ENCODE measurements at regions of chr4 and their contacts with region 1.

Region 1: DNA sequence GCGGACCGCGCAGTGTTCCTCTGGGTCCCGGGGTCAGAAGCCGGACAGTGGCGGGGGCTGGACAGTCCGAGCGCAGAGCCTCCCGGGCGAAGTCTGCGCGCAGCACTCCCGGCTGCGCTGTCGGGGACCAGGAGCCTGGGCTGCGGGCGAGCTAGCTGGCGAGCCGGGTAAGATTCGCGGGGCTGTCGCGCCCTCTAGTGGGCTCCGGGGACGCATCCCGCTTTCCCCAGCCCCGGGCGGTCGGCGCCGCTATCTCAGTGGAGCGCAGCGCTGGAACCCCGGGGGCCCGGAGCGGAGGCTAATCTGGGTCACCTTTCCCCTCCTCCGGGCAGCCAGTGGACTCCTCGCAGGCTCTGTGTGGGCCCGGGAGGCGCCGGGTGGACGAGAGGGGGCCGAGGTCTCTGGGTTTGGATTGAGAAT is 4.2 kb downstream of the PDGFRA start:
- DNase-seq: peak; percentile 64
- H3K4me3 Mint-ChIP-seq: peak overlapping the region; percentile 41
- H3K27ac Mint-ChIP-seq: no peak overlapping the region
- H3K4me1 Mint-ChIP-seq: peaks cover 19% of the 10 kb centered on the region
- H3K27me3 Mint-ChIP-seq: peaks cover 55% of the 10 kb centered on the region

Region 2: GRCh38 chr4:52376132-52376704 is 1857.1 kb before region 1 on chr4:
- intact Hi-C with region 1: loop called (anchors 5 kb)
- DNase-seq: no peak
- H3K4me3 Mint-ChIP-seq: no peak overlapping the region
- H3K27ac Mint-ChIP-seq: no peak overlapping the region
- H3K4me1 Mint-ChIP-seq: no peaks in the 10 kb centered on the region
- H3K27me3 Mint-ChIP-seq: no peaks in the 10 kb centered on the region

Region 3: DNA sequence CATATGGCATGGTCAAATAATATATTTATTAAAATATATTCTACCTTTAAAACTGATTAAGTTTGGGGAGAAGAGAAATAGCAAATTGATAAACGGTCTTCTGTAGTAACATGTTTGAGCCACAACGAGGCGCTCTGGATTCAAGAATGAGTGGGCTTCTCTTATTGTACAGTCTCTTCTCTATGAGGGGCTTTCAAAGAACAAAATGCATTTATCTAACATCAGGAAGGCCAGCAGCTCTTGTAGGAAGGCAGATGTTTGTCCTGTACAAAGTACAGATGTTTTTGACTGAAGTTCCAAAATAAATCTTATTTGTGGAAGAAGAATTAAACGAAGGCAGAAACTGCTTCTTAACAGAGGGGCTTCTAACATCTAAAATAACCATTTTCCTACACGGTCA is 1217.6 kb before region 1 on chr4:
- intact Hi-C with region 1: loop called (anchors 10 kb)
- DNase-seq: no peak
- H3K4me3 Mint-ChIP-seq: no peak overlapping the region
- H3K27ac Mint-ChIP-seq: no peak overlapping the region
- H3K4me1 Mint-ChIP-seq: peaks cover 28% of the 10 kb centered on the region
- H3K27me3 Mint-ChIP-seq: no peaks in the 10 kb centered on the region

Region 4: DNA sequence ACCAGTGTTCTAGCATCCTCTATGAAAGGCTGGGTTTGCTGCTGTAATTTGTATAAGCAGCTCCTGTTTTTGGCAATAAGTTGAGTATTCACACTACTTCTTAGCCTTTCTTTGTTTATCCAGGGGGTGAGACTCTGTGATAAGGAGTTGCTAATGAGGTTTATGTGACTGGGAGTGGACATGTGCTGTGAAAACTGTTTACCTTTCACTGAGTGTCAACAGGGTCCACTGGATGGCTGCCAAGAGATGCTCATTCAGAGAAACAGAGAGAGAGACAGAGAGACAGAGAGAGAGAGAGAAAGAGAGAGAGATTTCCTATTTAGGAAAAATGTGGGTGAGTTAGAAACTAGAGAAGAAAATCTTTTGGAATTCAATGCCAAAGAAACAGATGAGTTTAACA is 402.8 kb before region 1 on chr4:
- intact Hi-C with region 1: no loop called
- DNase-seq: no peak
- H3K4me3 Mint-ChIP-seq: no peak overlapping the region
- H3K27ac Mint-ChIP-seq: no peak overlapping the region
- H3K4me1 Mint-ChIP-seq: no peaks in the 10 kb centered on the region
- H3K27me3 Mint-ChIP-seq: no peaks in the 10 kb centered on the region

Region 5: GRCh38 chr4:53908661-53909078 is 324.6 kb before region 1 on chr4:
- intact Hi-C with region 1: loop called (anchors 1 kb)
- DNase-seq: no peak
- H3K4me3 Mint-ChIP-seq: no peak overlapping the region
- H3K27ac Mint-ChIP-seq: no peak overlapping the region
- H3K4me1 Mint-ChIP-seq: peaks cover 11% of the 10 kb centered on the region
- H3K27me3 Mint-ChIP-seq: peaks cover 46% of the 10 kb centered on the region

Region 6: DNA sequence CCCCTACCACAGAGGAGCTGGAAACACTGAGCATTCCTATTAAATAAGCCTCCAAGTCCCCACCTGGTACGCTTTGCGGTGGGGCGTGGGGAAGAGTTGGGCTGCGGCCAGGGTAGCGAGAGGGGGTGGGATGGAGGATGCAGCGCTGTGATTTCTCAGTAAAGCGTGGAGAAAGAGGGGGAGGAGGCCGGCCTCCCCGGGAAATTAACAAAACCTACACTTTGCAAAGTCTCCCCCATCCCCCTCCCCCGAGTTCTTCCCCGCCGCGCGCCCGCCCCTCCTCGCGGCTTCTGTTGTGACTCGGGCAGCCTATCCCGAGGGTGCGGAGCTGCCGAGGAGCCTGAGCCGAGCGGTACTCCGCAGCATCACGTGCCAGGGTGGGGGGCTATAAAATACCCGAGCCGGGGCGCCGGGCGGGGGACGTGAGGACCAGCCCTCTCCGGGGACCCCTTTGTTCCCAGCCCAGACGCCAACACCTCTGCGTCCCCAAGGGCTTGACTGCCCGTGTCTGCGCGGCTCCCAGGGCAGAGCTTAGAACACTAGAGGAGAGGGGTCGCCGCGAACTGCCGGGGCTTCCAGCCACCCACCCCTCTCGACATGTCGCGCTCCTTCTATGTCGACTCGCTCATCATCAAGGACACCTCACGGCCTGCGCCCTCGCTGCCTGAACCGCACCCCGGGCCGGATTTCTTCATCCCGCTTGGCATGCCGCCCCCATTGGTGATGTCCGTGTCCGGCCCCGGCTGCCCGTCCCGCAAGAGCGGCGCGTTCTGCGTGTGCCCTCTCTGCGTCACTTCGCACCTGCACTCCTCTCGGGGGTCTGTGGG is 133.3 kb before region 1 on chr4 and contains the start of gene GSX2:
- intact Hi-C with region 1: loop called (anchors 2 kb)
- DNase-seq: no peak
- H3K4me3 Mint-ChIP-seq: no peak within 1 kb of the TSS
- H3K27ac Mint-ChIP-seq: no peak within 1 kb of the TSS
- H3K4me1 Mint-ChIP-seq: peaks cover 26% of the 10 kb centered on the region
- H3K27me3 Mint-ChIP-seq: peaks cover 90% of the 10 kb centered on the region
- total RNA-seq, gene GSX2: not detected in 2 replicates

Region 7: GRCh38 chr4:54277691-54278090 is 44.4 kb after region 1 on chr4:
- intact Hi-C with region 1: no loop called
- DNase-seq: no peak
- H3K4me3 Mint-ChIP-seq: no peak overlapping the region
- H3K27ac Mint-ChIP-seq: no peak overlapping the region
- H3K4me1 Mint-ChIP-seq: peaks cover 32% of the 10 kb centered on the region
- H3K27me3 Mint-ChIP-seq: no peaks in the 10 kb centered on the region

Measured in activated T-helper 2 cell treated with anti-CD3 and anti-CD28 coated beads, Interferon-gamma antibody, Interleukin-2, Interleukin-4, amounts not matched to agents 10 μg/mL and 5 μg/mL and 100 μg/mL, durations not matched to agents 14 hours and 24 hours and 36 hours (primary cell).